IMR-90 (cell line): ENCODE measurements at regions of chr1 and their contacts with region 1.

Region 1: GRCh38 chr1:85654066-85654782 is 54.0 kb downstream of the ZNHIT6 start:
- DNase-seq: peak; percentile 69
- ATAC-seq: peak; percentile 90
- H3K4me3 ChIP-seq: no peak overlapping the region
- H3K27ac ChIP-seq: peak overlapping the region; percentile 43; the same call in 1 of the 2 replicates
- H3K4me1 ChIP-seq: peaks cover 8% of the 10 kb centered on the region
- H3K27me3 ChIP-seq: no peaks in the 10 kb centered on the region
- CTCF ChIP-seq: no peak
- POLR2A ChIP-seq: no peak
- RAD21 ChIP-seq: no peak

Region 2: DNA sequence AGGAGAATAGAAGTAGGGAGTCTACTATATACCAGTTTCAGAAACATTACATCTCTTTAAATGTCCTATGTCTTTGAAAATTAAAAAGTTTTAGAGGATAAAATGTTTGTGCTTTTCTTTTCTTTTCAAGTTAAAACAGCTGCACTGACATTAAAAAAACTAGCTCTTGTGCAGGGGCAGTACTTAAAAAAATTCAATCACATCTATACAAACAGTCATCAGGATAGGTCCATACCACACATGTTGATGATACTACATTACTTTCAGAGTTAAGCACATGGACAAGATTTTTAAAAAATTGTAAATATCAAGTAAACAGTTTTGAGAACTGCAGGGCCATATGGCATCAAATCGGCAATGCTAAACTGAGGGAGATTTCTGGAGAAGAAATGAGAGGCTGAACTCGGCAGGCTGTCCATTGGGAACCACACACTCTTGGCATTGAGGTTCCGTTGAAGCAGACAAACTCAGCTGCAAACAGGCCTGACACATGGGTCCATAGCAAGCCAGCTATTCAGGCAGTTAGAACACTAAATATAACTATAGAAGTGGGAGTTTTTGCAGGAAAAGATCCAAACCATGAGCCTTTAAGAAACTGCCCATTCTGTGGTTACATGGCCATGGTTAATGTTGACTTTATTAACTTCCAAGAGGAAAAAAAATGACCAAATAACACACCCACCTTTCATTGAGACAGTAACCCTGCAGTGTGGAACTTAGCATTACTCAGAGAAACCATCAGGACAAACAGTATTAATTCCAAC is 293.3 kb before region 1 on chr1:
- CTCF ChIA-PET with region 1: no interaction called
- POLR2A ChIA-PET with region 1: no interaction called
- dilution Hi-C with region 1: no loop called
- in situ Hi-C with region 1: no loop called
- intact Hi-C with region 1: no loop called
- DNase-seq: peak; percentile 87
- ATAC-seq: peak; percentile 68
- H3K4me3 ChIP-seq: no peak overlapping the region
- H3K27ac ChIP-seq: peak overlapping the region; percentile 70
- H3K4me1 ChIP-seq: peaks cover 15% of the 10 kb centered on the region
- H3K27me3 ChIP-seq: no peaks in the 10 kb centered on the region
- CTCF ChIP-seq: no peak
- POLR2A ChIP-seq: no peak
- RAD21 ChIP-seq: no peak

Region 3: GRCh38 chr1:85463731-85464496 is 190.3 kb before region 1 on chr1:
- CTCF ChIA-PET with region 1: no interaction called
- POLR2A ChIA-PET with region 1: no interaction called
- dilution Hi-C with region 1: no loop called
- in situ Hi-C with region 1: no loop called
- intact Hi-C with region 1: no loop called
- DNase-seq: no peak
- ATAC-seq: peak; percentile 4
- H3K4me3 ChIP-seq: peak overlapping the region; percentile 95
- H3K27ac ChIP-seq: peak overlapping the region; percentile 92
- H3K4me1 ChIP-seq: peaks cover 7% of the 10 kb centered on the region
- H3K27me3 ChIP-seq: no peaks in the 10 kb centered on the region
- CTCF ChIP-seq: no peak
- POLR2A ChIP-seq: no peak
- RAD21 ChIP-seq: no peak

Region 4: DNA sequence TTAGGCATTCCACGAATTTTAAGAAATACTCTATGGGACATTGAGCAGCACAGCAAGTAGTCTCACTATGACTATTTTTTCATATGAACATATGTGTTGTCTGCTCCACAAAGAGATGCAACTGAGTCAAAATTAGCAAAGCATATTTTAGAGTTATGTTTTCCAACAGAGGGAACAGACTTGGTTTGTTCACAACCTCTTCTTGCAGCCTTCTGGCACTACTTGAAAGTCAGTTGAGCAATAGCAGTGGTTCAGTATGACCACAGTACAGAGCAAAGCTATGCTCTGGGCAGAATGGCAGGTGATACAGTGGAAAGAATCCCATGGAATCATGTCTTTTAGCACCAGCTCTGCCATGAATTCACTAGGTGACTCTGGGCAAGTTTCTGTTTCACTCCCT is 68.4 kb before region 1 on chr1:
- CTCF ChIA-PET with region 1: no interaction called
- POLR2A ChIA-PET with region 1: no interaction called
- dilution Hi-C with region 1: no loop called
- in situ Hi-C with region 1: no loop called
- intact Hi-C with region 1: no loop called
- DNase-seq: peak; percentile 86
- ATAC-seq: 0 out of 2 replicates have a peak, but pooled peaks have one; percentile 1
- H3K4me3 ChIP-seq: no peak overlapping the region
- H3K27ac ChIP-seq: no peak overlapping the region
- H3K4me1 ChIP-seq: no peaks in the 10 kb centered on the region
- H3K27me3 ChIP-seq: no peaks in the 10 kb centered on the region
- CTCF ChIP-seq: no peak
- POLR2A ChIP-seq: no peak
- RAD21 ChIP-seq: no peak; the same call in 1 of the 2 replicates

Region 5: GRCh38 chr1:85671166-85671565 is 16.9 kb after region 1 on chr1:
- CTCF ChIA-PET with region 1: no interaction called
- POLR2A ChIA-PET with region 1: no interaction called
- dilution Hi-C with region 1: no loop called
- in situ Hi-C with region 1: no loop called
- intact Hi-C with region 1: loop called (anchors 2 kb)
- DNase-seq: no peak
- ATAC-seq: no peak
- H3K4me3 ChIP-seq: no peak overlapping the region
- H3K27ac ChIP-seq: no peak overlapping the region
- H3K4me1 ChIP-seq: no peaks in the 10 kb centered on the region
- H3K27me3 ChIP-seq: no peaks in the 10 kb centered on the region
- CTCF ChIP-seq: no peak
- POLR2A ChIP-seq: no peak
- RAD21 ChIP-seq: no peak

Region 6: DNA sequence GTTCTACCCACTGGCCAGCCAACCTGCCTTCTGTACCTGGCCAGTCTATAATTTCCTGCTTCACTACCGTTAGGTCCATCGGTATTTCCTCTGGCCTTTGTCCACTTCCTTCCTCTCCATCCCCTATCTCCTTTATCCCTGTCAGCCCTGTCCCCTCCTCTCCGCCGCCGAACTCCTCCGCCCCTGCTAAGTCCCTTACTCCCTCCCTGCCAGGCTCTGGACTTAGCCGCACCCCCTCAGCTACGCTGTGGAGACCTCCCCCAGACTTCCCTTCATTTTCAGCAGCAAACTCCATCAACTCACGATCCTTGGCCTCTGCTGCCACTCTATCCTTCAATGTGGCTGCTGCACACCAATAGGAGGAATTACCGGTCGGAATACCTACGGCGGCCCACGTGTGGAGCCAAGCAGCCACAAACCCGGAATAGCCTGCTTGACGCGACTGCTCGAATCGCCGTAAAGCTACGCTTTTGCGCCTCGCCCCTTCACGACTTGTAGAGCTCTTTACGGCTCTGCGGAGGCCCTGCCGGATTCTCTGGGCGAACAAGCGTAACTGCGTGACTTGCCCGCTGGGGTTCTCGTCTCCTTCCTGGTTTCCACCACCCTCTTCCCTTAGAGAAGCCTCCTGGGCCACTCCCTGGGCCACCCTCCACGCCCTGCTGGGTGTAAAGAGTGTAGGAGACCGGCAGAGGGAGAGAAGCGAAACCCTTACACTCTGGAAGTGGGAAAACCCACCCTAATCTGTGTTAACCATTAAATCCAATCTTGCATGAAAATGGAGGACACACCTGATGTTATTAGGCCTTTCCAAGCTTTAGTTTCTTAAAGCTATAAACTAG is 54.0 kb after region 1 on chr1 and contains the start of gene ZNHIT6:
- CTCF ChIA-PET with region 1: no interaction called
- POLR2A ChIA-PET with region 1: no interaction called
- dilution Hi-C with region 1: no loop called
- in situ Hi-C with region 1: no loop called
- intact Hi-C with region 1: no loop called
- DNase-seq: peak; percentile 98
- ATAC-seq: peak; percentile 96
- H3K4me3 ChIP-seq: peak within 1 kb of the TSS; percentile 90
- H3K27ac ChIP-seq: peak within 1 kb of the TSS; percentile 89
- H3K4me1 ChIP-seq: peaks cover 1% of the 10 kb centered on the region; the same call in 1 of the 2 replicates
- H3K27me3 ChIP-seq: no peaks in the 10 kb centered on the region
- CTCF ChIP-seq: peak; percentile 45
- POLR2A ChIP-seq: peak; percentile 37; the same call in 1 of the 2 replicates
- RAD21 ChIP-seq: peak; percentile 50
- total RNA-seq, gene ZNHIT6: 9.0 and 17.2 TPM in 2 replicates